ENCODE measurements at regions of chr4 and their contacts with region 1.

Region 1: DNA sequence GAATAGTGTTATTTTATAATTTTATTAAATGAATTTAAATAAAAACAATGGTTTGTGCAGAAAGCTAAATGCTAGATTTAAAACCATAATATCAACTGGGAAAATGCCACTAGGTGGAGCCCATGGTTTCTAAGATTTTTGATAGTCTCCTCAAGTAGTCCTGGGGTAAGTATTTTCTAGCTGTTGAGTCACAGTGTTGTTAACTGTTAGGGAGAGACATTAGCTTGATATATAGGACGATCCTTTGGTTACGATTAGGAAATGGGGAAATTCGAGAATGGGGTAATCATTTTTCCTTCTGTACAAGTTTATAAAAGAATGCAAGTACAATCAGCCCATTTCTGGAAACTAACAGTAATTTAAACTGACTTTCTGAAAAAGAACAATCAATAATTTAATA is 378.4 kb downstream of the ANKRD50 start:
- DNase-seq: peak; percentile 62 to 77 (median 75)
- H3K4me3 ChIP-seq: no peak overlapping the region
- H3K27ac ChIP-seq: no peak overlapping the region
- H3K4me1 ChIP-seq: peaks cover 0 to 18% (median 2%) of the 10 kb centered on the region in 4 experiments
- H3K27me3 ChIP-seq: no peaks in the 10 kb centered on the region

Region 2: GRCh38 chr4:124322234-124323065 is 11.7 kb before region 1 on chr4:
- CTCF ChIA-PET with region 1: interaction called, 11 read pairs
- POLR2A ChIA-PET with region 1: no interaction called
- DNase-seq: peak; percentile 28 to 69 (median 58)
- H3K4me3 ChIP-seq: no peak overlapping the region
- H3K27ac ChIP-seq: no peak overlapping the region
- H3K4me1 ChIP-seq: peaks cover 0 to 5% (median 0%) of the 10 kb centered on the region in 4 experiments
- H3K27me3 ChIP-seq: no peaks in the 10 kb centered on the region

Region 3: GRCh38 chr4:124372916-124373315 is 38.8 kb after region 1 on chr4:
- CTCF ChIA-PET with region 1: no interaction called
- POLR2A ChIA-PET with region 1: no interaction called
- DNase-seq: no peak
- H3K4me3 ChIP-seq: no peak overlapping the region
- H3K27ac ChIP-seq: no peak overlapping the region
- H3K4me1 ChIP-seq: no peaks in the 10 kb centered on the region
- H3K27me3 ChIP-seq: no peaks in the 10 kb centered on the region

Region 4: DNA sequence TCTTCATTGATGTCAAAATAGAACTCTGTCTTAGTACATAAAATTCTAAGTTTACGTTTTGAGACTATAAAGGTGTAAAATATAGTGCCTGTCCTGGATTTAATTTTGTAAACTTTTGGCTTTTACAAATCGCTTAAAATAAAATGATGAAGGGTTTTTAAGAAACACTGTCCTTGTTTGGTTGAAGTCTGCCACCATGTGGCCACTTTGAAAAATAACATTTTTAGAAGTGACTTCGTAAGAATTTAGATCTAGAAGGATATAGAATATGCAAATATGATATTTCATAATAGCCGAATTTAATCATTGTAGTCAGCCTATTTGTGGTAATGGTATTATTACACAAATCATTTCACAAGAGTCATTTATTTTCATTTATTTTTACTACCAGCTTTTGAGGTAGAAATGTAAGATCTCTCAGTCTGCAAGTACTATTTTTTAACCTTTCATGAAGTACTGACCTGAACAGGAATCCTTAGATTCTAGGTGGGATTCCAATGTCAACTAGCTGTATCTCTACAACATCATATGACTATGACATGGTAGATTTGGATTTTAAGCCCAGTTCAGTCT is 949.7 kb after region 1 on chr4:
- CTCF ChIA-PET with region 1: interaction called, 39 read pairs
- POLR2A ChIA-PET with region 1: no interaction called
- DNase-seq: peak; percentile 25 to 65 (median 61)
- H3K4me3 ChIP-seq: no peak overlapping the region
- H3K27ac ChIP-seq: no peak overlapping the region
- H3K4me1 ChIP-seq: no peaks in the 10 kb centered on the region
- H3K27me3 ChIP-seq: no peaks in the 10 kb centered on the region